Mammary epithelial cell (primary cell): ENCODE measurements at regions of chr10 and their contacts with region 1.

Region 1: DNA sequence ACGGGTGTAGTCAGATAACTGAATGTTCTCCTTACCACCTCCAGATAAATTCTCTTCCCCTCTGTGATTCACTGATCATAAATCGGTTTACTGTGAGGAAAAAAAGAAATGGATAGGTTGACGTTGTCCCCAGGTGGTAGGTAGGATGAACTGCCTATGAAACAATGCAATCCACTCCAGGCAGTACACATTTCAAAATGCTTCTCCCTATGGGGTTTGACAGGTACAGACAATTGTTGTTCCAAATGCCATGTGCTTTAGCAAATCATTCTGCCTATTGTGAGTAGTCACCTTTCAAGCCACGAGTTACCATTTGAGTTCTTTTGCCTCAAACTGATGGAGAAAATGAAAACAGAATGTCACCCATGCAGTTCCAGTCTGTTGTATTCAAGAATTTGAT is 21.8 kb downstream of the VIM start:
- DNase-seq: peak; percentile 46
- H3K4me3 ChIP-seq: no peak overlapping the region
- H3K27ac ChIP-seq: no peak overlapping the region
- H3K4me1 ChIP-seq: peaks cover 9% of the 10 kb centered on the region
- H3K27me3 ChIP-seq: no peaks in the 10 kb centered on the region
- CTCF ChIP-seq: peak; percentile 68 to 79

Region 2: DNA sequence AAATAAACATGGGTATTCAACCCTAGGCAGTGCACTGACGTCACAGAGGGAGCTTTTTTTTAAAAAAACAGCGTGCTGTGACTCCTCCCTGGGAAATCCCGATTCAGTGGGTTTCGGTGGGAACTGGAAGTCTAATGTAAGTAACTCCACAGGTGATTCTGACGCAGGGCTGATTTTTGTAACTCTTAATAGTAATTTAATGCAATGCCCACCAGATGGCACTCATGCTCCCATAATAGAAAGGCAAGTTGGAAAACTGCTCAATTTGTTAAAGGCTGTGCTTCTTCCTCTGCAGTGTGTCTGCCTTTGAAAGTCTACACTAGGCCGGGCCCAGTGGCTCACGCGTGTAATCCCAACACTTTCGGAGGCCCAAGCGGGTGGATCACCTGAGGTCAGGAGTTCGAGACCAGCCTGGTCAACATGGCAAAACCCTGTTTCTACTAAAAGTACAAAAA is 421.7 kb before region 1 on chr10:
- CTCF ChIA-PET with region 1: no interaction called
- dilution Hi-C with region 1: no loop called
- in situ Hi-C with region 1: loop called in 1 of 2 experiments (anchors 5 kb)
- intact Hi-C with region 1: loop called (anchors 2 kb)
- DNase-seq: peak; percentile 69
- H3K4me3 ChIP-seq: no peak overlapping the region
- H3K27ac ChIP-seq: no peak overlapping the region
- H3K4me1 ChIP-seq: peaks cover 13% of the 10 kb centered on the region
- H3K27me3 ChIP-seq: no peaks in the 10 kb centered on the region
- CTCF ChIP-seq: peak; percentile 41 to 61

Region 3: GRCh38 chr10:16843252-16843870 is 406.5 kb before region 1 on chr10:
- CTCF ChIA-PET with region 1: no interaction called
- dilution Hi-C with region 1: no loop called
- in situ Hi-C with region 1: loop called in 1 of 2 experiments (anchors 5 kb)
- intact Hi-C with region 1: loop called (anchors 1 kb)
- DNase-seq: peak; percentile 61
- H3K4me3 ChIP-seq: no peak overlapping the region
- H3K27ac ChIP-seq: no peak overlapping the region
- H3K4me1 ChIP-seq: peaks cover 2% of the 10 kb centered on the region
- H3K27me3 ChIP-seq: no peaks in the 10 kb centered on the region
- CTCF ChIP-seq: peak; percentile 38 to 43

Region 4: GRCh38 chr10:16853201-16853600 is 396.6 kb before region 1 on chr10:
- CTCF ChIA-PET with region 1: no interaction called
- dilution Hi-C with region 1: loop called (anchors 25 kb)
- in situ Hi-C with region 1: loop called in 1 of 2 experiments (anchors 5 kb)
- intact Hi-C with region 1: no loop called
- DNase-seq: no peak
- H3K4me3 ChIP-seq: no peak overlapping the region
- H3K27ac ChIP-seq: no peak overlapping the region
- H3K4me1 ChIP-seq: peaks cover 18% of the 10 kb centered on the region
- H3K27me3 ChIP-seq: no peaks in the 10 kb centered on the region
- CTCF ChIP-seq: peak in 1 of 2 donors; percentile 21